Transverse colon (tissue), 4 donors: ENCODE measurements at regions of chr16 and their contacts with region 1.

Region 1: DNA sequence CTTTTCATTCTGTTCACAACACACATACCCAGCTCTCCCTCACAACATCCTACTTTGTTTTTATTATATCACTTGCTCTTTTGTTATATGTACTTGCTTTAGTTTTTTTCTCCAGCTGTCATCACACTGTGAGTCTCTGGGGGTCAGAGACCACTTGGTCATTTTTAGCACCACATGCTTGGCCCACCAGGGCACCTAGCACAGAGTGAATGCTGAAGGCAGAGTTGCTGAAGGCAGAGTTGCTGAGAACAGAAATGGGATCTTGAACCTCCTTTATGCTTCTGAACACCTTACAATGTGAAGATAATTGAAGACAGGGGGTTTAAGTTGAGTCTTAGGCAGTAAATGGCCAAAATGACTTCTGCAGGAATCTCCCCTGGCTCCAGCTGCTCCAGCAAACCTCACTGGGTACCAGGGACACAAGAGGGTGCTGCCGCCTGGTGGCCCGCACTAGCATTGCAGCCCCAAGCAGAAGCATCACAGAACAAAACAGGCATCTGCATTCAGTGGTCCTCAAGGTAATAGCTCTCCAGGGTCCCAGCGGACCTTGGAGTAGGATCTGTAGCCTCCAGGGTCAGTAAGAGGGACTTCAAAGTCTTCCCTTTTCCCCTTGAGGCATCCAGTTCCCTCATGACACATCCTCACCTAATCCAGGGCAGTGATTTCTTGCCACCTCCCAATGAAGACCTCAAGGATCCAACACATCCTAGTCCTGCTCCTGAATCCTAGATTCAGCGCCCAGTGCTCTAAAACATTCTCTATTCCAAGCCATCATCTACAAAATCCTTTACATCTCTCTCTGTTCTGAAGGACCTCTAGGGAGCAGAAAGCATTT is 1972.6 kb downstream of the TP53TG3F start:
- DNase-seq: no peak
- H3K4me3 ChIP-seq: no peak overlapping the region
- H3K27ac ChIP-seq: no peak overlapping the region
- H3K4me1 ChIP-seq: no peaks in the 10 kb centered on the region
- H3K27me3 ChIP-seq: no peaks in the 10 kb centered on the region
- CTCF ChIP-seq: peak in 3 of 5 experiments; percentile 9 to 36 (median 28)
- EP300 ChIP-seq: no peak
- POLR2A ChIP-seq: no peak

Region 2: DNA sequence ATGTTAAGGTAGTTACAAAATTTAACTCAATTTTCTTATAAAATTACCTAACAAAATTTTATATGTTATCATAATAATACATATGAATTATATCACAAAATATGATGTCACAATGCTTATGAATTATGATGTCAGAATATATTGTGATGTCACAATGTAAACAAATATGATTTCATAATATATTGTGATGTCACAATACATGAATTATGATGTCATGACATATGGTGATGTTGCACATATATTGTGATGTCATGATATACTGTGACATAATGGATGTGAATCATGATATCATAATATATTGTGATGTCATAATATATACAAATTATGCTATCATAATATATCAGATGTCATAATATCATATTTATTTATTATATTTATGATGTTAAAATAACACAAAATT is 92.7 kb before region 1 on chr16:
- in situ Hi-C with region 1: loop called in 1 of 4 experiments (anchors 25 kb)
- intact Hi-C with region 1: no loop called
- DNase-seq: no peak
- H3K4me3 ChIP-seq: no peak overlapping the region
- H3K27ac ChIP-seq: no peak overlapping the region
- H3K4me1 ChIP-seq: no peaks in the 10 kb centered on the region
- H3K27me3 ChIP-seq: no peaks in the 10 kb centered on the region
- CTCF ChIP-seq: no peak
- EP300 ChIP-seq: no peak
- POLR2A ChIP-seq: no peak